Calu3 (cell line): ENCODE measurements at regions of chr4 and their contacts with region 1.

Region 1: GRCh38 chr4:90025248-90025647 is 101.9 kb upstream of the CCSER1 start:
- DNase-seq: no peak
- H3K4me3 Mint-ChIP-seq: no peak overlapping the region
- H3K27ac Mint-ChIP-seq: no peak overlapping the region
- H3K4me1 Mint-ChIP-seq: no peaks in the 10 kb centered on the region
- H3K27me3 Mint-ChIP-seq: no peaks in the 10 kb centered on the region
- CTCF ChIP-seq: no peak

Region 2: GRCh38 chr4:89868999-89869589 is 156.2 kb before region 1 on chr4:
- CTCF ChIA-PET with region 1: no interaction called
- intact Hi-C with region 1: no loop called
- DNase-seq: no peak
- H3K4me3 Mint-ChIP-seq: no peak overlapping the region
- H3K27ac Mint-ChIP-seq: no peak overlapping the region
- H3K4me1 Mint-ChIP-seq: no peaks in the 10 kb centered on the region
- H3K27me3 Mint-ChIP-seq: no peaks in the 10 kb centered on the region
- CTCF ChIP-seq: no peak

Region 3: DNA sequence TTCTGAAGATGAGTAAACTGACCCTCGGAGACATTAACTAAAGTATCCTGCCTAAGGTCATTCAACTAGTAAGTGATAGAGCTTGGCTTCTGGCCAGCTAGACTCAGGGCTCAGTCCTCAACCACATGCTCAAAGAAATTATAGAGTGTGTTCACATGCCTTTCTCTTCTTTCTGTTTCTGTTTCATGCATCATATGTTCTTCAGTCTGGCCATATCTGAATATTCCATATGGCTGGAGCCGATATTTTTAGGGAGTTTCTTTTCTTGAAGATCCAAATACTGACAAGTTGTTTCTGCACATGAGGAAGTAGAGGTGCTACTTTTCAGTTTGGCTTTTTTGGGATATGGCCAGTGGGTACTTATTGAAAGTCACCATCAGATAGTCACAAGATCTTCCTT is 85.7 kb before region 1 on chr4:
- CTCF ChIA-PET with region 1: no interaction called
- intact Hi-C with region 1: no loop called
- DNase-seq: no peak
- H3K4me3 Mint-ChIP-seq: no peak overlapping the region
- H3K27ac Mint-ChIP-seq: no peak overlapping the region
- H3K4me1 Mint-ChIP-seq: no peaks in the 10 kb centered on the region
- H3K27me3 Mint-ChIP-seq: no peaks in the 10 kb centered on the region
- CTCF ChIP-seq: no peak

Region 4: GRCh38 chr4:89949782-89950387 is 75.4 kb before region 1 on chr4:
- CTCF ChIA-PET with region 1: no interaction called
- intact Hi-C with region 1: loop called (anchors 5 kb)
- DNase-seq: no peak
- H3K4me3 Mint-ChIP-seq: no peak overlapping the region
- H3K27ac Mint-ChIP-seq: no peak overlapping the region
- H3K4me1 Mint-ChIP-seq: no peaks in the 10 kb centered on the region
- H3K27me3 Mint-ChIP-seq: no peaks in the 10 kb centered on the region
- CTCF ChIP-seq: no peak

Region 5: GRCh38 chr4:90069151-90069550 is 43.9 kb after region 1 on chr4:
- CTCF ChIA-PET with region 1: no interaction called
- intact Hi-C with region 1: no loop called
- DNase-seq: peak; percentile 9
- H3K4me3 Mint-ChIP-seq: no peak overlapping the region
- H3K27ac Mint-ChIP-seq: peak overlapping the region; percentile 73
- H3K4me1 Mint-ChIP-seq: peaks cover 11% of the 10 kb centered on the region
- H3K27me3 Mint-ChIP-seq: no peaks in the 10 kb centered on the region
- CTCF ChIP-seq: no peak